Activated CD4-positive, alpha-beta T cell treated with anti-CD3 and anti-CD28 coated beads, Interleukin-2, amount 10 ng/mL, durations not matched to agents 24 days and 14 days (primary cell): ENCODE measurements at regions of chr1 and their contacts with region 1.

Region 1: GRCh38 chr1:166838766-166839599 is at the start of gene POGK:
- DNase-seq: peak; percentile 95
- H3K4me3 Mint-ChIP-seq: peak within 1 kb of the TSS; percentile 95
- H3K27ac Mint-ChIP-seq: peak within 1 kb of the TSS; percentile 98
- H3K4me1 Mint-ChIP-seq: peaks cover 39% of the 10 kb centered on the region
- H3K27me3 Mint-ChIP-seq: peaks cover 2% of the 10 kb centered on the region
- total RNA-seq, gene POGK: 52.4 and 53.9 TPM in 2 replicates

Region 2: GRCh38 chr1:166485620-166486019 is 353.4 kb before region 1 on chr1:
- intact Hi-C with region 1: no loop called
- DNase-seq: no peak
- H3K4me3 Mint-ChIP-seq: no peak overlapping the region
- H3K27ac Mint-ChIP-seq: no peak overlapping the region
- H3K4me1 Mint-ChIP-seq: peaks cover 5% of the 10 kb centered on the region
- H3K27me3 Mint-ChIP-seq: peaks cover 2% of the 10 kb centered on the region

Region 3: GRCh38 chr1:166855558-166855957 is 16.6 kb after region 1 on chr1:
- intact Hi-C with region 1: no loop called
- DNase-seq: no peak
- H3K4me3 Mint-ChIP-seq: no peak overlapping the region
- H3K27ac Mint-ChIP-seq: no peak overlapping the region
- H3K4me1 Mint-ChIP-seq: peaks cover 20% of the 10 kb centered on the region
- H3K27me3 Mint-ChIP-seq: no peaks in the 10 kb centered on the region

Region 4: DNA sequence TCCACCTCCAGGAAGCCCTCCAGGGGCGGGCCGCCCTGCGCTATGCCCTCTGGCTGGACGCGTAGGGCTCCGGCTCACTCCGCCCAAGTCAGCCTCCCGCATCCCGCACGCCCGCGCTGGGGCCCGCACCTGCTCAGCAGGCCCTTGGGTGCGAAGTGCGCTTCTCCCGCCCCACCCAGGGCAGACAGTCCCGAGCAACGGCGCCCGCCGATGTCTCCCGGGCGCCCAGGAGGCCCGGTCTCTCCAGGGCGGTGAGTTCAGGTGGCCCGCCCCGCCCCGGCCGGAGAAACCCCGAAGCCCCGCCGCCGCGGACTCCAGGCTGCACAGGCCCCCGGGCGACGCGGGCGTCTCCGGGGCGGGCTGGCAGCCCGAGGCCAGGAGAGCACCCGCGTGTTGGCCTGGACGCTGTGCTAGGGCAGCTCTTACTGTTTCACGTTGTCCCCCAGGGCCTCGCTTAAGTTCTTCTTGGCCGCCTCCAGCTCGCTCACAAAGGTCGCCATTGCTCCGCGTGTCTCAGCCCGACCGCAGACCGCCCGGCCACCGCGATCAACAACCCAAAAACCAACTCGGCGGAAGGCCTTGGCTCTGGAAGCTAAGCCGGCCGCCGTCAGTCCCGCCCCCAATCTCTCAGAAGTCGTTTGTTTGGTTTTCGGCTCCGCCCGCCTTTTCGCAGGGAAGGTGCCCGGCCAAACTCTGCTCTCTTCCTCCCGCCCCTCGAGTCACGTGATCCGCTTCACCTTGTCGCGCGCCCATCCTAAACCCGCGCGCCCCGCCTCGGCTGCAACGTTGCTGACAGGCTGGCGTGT is 37.0 kb after region 1 on chr1 and contains the start of gene TADA1:
- intact Hi-C with region 1: loop called (anchors 1 kb)
- DNase-seq: peak; percentile 99
- H3K4me3 Mint-ChIP-seq: peak within 1 kb of the TSS; percentile 91
- H3K27ac Mint-ChIP-seq: peak within 1 kb of the TSS; percentile 100
- H3K4me1 Mint-ChIP-seq: peaks cover 46% of the 10 kb centered on the region
- H3K27me3 Mint-ChIP-seq: peaks cover 7% of the 10 kb centered on the region
- total RNA-seq, gene TADA1: 17.0 and 18.4 TPM in 2 replicates

Region 5: GRCh38 chr1:166888373-166889111 is 49.6 kb after region 1 on chr1:
- intact Hi-C with region 1: no loop called
- DNase-seq: no peak
- H3K4me3 Mint-ChIP-seq: no peak overlapping the region
- H3K27ac Mint-ChIP-seq: no peak overlapping the region
- H3K4me1 Mint-ChIP-seq: peaks cover 22% of the 10 kb centered on the region
- H3K27me3 Mint-ChIP-seq: peaks cover 54% of the 10 kb centered on the region